Cardiac septum (tissue), 1 donor: ENCODE measurements at regions of chr4 and their contacts with region 1.

Region 1: DNA sequence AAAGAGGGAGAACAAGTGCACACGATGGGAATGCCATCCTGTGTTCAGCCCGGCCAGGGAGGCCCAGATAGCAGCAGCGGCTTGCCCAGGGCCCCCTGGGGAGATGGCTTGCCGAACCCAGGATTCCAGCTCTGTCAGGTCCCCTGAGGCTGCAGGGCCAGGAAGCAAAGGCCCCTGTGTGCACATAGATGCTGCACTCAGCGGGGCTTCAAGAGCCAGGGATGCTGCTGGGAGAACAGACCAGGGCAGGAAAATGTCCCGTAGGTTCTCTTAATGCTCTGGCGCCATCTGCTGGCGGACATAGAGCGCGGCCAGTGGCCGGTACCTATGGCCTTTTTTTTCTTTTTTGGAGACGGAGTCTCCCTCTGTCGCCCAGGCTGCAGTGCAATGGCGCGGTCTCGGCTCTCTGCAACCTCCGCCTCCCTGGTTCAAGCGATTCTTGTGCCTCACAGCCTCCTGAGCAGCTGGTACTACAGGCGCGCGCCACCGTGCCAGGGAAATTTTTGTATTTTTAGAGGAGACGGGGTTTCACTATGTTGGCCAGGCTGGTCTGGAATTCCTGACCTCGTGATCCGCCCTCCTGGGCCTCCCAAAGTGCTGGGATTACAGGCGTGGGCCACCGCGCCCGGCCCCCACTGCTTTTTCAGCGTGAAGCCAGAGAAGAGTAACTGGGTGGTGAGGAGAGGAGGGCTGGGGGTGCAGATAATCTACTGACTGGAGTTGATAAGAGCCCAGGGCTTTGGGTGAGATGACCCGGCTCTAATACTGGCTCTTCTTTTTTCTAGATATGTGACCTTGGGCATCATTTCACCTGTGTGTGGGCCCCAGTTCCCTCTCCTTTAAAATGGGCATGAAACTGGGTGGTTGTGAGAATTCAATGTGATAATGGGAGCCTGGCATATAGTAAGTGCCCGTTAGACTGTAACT is 22.5 kb downstream of the MED28 start:
- DNase-seq: peak; percentile 80

Region 2: GRCh38 chr4:17544205-17544604 is 92.8 kb before region 1 on chr4:
- intact Hi-C with region 1: loop called (anchors 1 kb)
- DNase-seq: no peak

Region 3: DNA sequence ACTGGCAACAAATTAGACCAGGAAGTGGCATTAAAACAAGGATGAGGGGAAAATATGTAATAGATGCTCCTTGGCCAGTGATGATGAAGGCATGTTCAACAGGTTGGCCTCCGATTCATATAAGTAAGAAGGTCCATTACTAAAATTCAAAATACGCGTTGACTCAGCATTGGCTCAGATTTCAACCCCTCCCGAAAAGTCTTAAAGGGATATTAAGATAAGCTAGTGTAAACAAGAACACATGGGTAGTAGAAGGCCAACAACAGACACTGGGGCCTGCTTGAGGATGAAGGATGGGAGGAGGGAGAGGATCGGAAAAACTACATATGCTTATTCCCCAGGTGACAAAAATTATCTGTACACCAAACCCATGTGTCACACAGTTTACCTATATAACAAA is 79.1 kb before region 1 on chr4:
- intact Hi-C with region 1: no loop called
- DNase-seq: no peak

Region 4: GRCh38 chr4:17680559-17681280 is 43.8 kb after region 1 on chr4:
- intact Hi-C with region 1: no loop called
- DNase-seq: no peak